Posterior cingulate gyrus (tissue), 11 donors: ENCODE measurements at regions of chr9 and their contacts with region 1.

Region 1: GRCh38 chr9:114653556-114654159 is 3.9 kb downstream of the TEX53 start:
- DNase-seq: peak in 7 of 10 donors; percentile 25 to 86 (median 70)

Region 2: DNA sequence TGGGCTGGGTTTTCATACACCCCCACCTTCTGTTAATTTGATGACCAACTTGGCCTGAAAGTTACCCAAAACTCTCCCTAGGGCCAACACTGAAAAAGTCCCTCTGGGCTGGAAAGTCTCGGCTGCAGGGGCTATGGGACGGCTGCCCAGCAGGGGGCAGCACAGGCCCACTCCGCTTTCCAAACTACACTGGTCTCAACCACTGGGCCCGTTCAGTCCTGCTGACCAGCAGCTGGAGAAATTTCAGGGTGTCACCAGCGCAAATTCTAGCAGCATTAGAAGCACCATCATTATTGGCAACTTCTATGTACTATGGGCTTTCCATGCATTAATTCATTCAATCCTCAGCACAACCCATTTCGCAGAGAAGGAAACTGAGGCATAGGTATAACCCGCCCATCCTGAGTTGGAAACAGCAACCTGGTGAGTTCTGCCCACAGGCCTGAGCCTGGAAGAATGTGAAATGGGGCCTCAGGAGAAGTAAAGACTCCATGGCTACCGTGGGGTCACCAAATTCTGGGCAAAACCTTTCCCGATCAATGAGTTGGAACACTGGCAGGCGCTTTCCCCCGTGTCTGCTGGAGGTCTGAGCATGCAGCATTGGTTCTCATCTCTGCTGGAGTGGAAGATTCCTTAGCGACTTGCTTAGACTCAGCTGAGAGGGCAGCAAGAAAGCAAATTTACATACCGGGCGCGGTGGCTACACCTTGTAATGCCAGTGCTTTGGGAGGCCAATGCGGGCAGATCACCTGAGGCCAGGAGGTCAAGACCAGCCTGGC is 314.3 kb before region 1 on chr9:
- intact Hi-C with region 1: loop called (anchors 2 kb)
- DNase-seq: peak in 6 of 10 donors; percentile 37 to 93 (median 60)

Region 3: GRCh38 chr9:114405294-114406034 is 248.2 kb before region 1 on chr9:
- intact Hi-C with region 1: loop called (anchors 1 kb)
- DNase-seq: peak; percentile 47 to 97 (median 86)

Region 4: GRCh38 chr9:114434878-114435311 is 218.8 kb before region 1 on chr9:
- intact Hi-C with region 1: loop called (anchors 1 kb)
- DNase-seq: peak in 4 of 10 donors; percentile 14 to 59 (median 34)

Region 5: GRCh38 chr9:114487607-114488300 is 165.9 kb before region 1 on chr9:
- intact Hi-C with region 1: loop called (anchors 2 kb)
- DNase-seq: peak in 6 of 10 donors; percentile 41 to 91 (median 61)

Region 6: DNA sequence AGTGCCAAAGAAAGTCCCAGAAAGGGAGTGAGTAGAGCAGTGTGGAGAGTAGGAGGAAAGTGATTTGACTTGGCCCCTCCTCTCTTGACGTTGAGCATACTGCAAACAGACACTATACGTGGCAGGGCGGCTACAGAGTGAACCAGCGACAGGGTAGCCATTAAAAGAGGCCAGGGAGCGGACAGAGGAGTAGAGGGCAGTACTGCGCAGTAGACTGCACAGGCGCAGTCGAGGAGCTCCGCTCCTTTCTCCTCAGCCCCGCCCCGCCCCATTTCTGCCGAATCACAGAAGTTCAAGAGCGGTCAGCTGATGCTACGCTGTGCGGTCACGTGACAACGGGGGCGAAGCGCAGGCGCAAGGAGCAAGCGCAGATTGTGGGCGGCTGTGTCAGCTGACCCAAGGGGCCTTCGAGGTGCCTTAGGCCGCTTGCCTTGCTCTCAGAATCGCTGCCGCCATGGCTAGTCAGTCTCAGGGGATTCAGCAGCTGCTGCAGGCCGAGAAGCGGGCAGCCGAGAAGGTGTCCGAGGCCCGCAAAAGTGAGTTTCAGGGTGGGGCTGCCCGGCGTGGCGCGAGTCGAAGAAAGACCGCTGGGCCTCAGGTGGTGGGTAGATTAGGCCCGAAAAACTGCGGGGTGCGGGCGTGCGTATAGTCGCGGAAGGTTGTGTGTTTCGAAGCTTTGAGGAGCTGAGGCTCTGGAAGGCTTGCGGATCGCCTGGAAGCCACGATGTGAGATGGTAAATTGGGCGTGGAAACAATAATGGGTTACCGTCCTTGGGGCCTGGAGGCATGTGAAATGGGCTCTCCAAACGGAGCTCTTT is 66.1 kb before region 1 on chr9 and contains the start of gene ATP6V1G1:
- intact Hi-C with region 1: loop called (anchors 10 kb)
- DNase-seq: peak; percentile 96 to 99 (median 98)